ENCODE measurements at regions of chr10 and their contacts with region 1.

Region 1: GRCh38 chr10:42782446-42783180 is at the start of gene BMS1:
- DNase-seq: peak; percentile 97
- H3K4me3 Mint-ChIP-seq: peak within 1 kb of the TSS; percentile 93
- H3K27ac Mint-ChIP-seq: peak within 1 kb of the TSS; percentile 96
- H3K4me1 Mint-ChIP-seq: peaks cover 18% of the 10 kb centered on the region
- H3K27me3 Mint-ChIP-seq: peaks cover 5% of the 10 kb centered on the region
- total RNA-seq, gene BMS1: 38.4 and 39.3 TPM in 2 replicates

Region 2: GRCh38 chr10:42552493-42553407 is 229.9 kb before region 1 on chr10:
- intact Hi-C with region 1: loop called (anchors 1 kb)
- DNase-seq: peak; percentile 98
- H3K4me3 Mint-ChIP-seq: peak overlapping the region; percentile 94
- H3K27ac Mint-ChIP-seq: peak overlapping the region; percentile 97
- H3K4me1 Mint-ChIP-seq: peaks cover 27% of the 10 kb centered on the region
- H3K27me3 Mint-ChIP-seq: no peaks in the 10 kb centered on the region

Region 3: GRCh38 chr10:42753126-42753506 is 29.5 kb before region 1 on chr10:
- intact Hi-C with region 1: loop called (anchors 1 kb)
- DNase-seq: peak; percentile 92
- H3K4me3 Mint-ChIP-seq: peak overlapping the region; percentile 81
- H3K27ac Mint-ChIP-seq: no peak overlapping the region
- H3K4me1 Mint-ChIP-seq: peaks cover 2% of the 10 kb centered on the region
- H3K27me3 Mint-ChIP-seq: peaks cover 62% of the 10 kb centered on the region

Region 4: DNA sequence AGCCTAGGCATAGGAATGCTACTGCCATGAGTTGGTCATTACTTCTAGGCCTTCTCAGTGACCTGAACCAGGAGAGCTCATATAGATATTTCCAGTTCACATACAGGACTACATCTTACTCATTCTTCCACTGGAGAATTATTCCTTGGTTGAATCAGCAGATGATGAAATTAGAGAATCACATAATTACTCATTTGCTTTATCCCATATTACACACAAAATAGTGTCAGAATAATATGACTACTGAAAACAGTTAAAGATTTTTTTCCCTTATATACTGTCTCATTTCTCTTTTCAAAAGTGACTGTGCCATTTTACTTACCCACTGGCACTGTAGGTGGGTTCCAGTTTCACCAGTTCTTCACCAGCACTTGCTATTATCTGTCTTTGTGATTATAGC is 18.5 kb after region 1 on chr10:
- intact Hi-C with region 1: loop called (anchors 2 kb)
- DNase-seq: no peak
- H3K4me3 Mint-ChIP-seq: no peak overlapping the region
- H3K27ac Mint-ChIP-seq: peak overlapping the region; percentile 73
- H3K4me1 Mint-ChIP-seq: peaks cover 6% of the 10 kb centered on the region
- H3K27me3 Mint-ChIP-seq: no peaks in the 10 kb centered on the region